Thyroid gland (tissue), 4 donors: ENCODE measurements at regions of chr22 and their contacts with region 1.

Region 1: DNA sequence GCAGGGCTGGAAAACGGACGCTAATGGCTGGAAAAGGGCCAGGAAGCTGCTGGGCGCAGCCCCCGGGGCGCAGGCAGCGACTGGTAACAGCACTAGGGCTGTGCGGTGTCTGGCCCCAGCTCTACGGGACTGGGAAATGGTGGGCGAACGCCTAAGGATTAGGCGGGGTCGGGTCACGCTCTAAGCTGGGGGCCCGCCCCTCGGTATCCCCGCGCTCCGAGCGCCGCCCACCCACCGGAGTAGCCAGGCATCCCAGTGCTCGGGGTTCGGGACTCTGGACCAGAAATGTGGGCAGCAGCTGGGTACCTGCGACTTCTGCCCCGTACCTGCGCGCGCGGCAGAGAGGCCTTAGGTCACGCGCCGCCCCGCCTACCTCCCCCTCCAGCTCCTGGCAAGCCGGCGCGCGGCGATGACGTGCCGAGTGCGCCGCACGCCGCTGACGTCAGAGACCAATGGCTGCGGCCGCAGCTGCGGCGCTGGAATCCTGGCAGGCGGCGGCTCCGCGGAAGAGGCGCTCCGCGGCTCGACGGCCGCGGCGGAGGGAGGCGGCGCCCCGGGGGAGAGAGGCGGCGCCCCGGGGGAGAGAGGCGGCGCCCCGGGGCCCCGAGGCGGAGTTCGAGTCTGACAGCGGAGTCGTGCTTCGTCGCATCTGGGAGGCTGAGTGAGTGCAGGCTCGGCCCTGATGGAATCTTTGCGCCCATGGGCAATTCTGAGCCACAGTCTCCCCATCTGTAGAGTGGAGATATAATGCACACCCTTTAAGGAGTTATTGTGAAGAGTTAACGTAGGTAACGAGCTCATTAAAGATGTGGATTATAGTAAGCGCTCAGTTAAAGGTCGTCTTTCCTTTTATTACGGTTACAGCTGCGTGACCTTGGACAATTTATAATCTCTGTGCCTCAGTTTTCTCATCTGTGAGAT is at the starts of genes HPS4 and SRRD:
- DNase-seq: peak; percentile 89 to 90
- H3K4me3 ChIP-seq: peak within 1 kb of the TSS; percentile 21 to 92 (median 74)
- H3K27ac ChIP-seq: peak within 1 kb of the TSS; percentile 85 to 91 (median 90)
- H3K4me1 ChIP-seq: peaks cover 20 to 83% of the 10 kb centered on the region in 2 donors
- H3K27me3 ChIP-seq: no peaks in the 10 kb centered on the region
- CTCF ChIP-seq: peak in 1 of 6 experiments; percentile 18
- POLR2A ChIP-seq: peak; percentile 8 to 89
- total RNA-seq, gene HPS4: 27.4 to 51.8 (median 39.1) TPM
- total RNA-seq, gene SRRD: 17.9 to 37.4 (median 26.2) TPM

Region 2: DNA sequence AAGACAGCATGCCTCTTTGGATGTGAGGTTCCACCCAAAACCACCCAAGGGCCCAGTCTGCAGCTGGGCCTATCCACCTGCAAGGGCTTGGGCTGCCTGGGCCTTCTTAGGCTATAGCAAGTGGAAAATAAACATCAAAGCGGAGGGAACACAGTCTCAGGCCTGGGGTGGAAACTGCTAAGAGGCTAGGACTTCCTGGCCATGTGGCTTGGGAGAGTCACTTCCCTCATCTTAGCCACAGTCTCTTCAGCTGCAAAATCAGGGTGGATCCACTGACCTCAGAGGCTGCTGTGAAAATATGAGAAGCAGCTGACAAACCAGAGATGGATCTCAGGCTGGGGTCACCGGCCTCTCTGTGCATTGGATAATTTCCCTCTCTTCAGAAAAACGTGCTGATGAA is 59.1 kb after region 1 on chr22:
- intact Hi-C with region 1: loop called (anchors 10 kb)
- DNase-seq: no peak
- H3K4me3 ChIP-seq: no peak overlapping the region
- H3K27ac ChIP-seq: peak overlapping the region in 1 of 3 donors; percentile 23
- H3K4me1 ChIP-seq: peaks cover 35 to 42% of the 10 kb centered on the region in 2 donors
- H3K27me3 ChIP-seq: no peaks in the 10 kb centered on the region
- CTCF ChIP-seq: no peak
- POLR2A ChIP-seq: no peak

Region 3: GRCh38 chr22:26573026-26573662 is 89.4 kb after region 1 on chr22:
- intact Hi-C with region 1: no loop called
- DNase-seq: no peak
- H3K4me3 ChIP-seq: no peak overlapping the region
- H3K27ac ChIP-seq: no peak overlapping the region
- H3K4me1 ChIP-seq: peaks cover 15 to 22% of the 10 kb centered on the region in 2 donors
- H3K27me3 ChIP-seq: no peaks in the 10 kb centered on the region
- CTCF ChIP-seq: no peak
- POLR2A ChIP-seq: no peak

Region 4: GRCh38 chr22:26589845-26590736 is 106.4 kb after region 1 on chr22 and contains the start of gene TPST2:
- intact Hi-C with region 1: loop called (anchors 10 kb)
- DNase-seq: peak; percentile 74 to 75
- H3K4me3 ChIP-seq: peak within 1 kb of the TSS; percentile 59 to 89 (median 71)
- H3K27ac ChIP-seq: peak within 1 kb of the TSS; percentile 47 to 88 (median 86)
- H3K4me1 ChIP-seq: peaks cover 28 to 35% of the 10 kb centered on the region in 2 donors
- H3K27me3 ChIP-seq: no peaks in the 10 kb centered on the region
- CTCF ChIP-seq: no peak
- POLR2A ChIP-seq: peak in 1 of 2 donors; percentile 84
- total RNA-seq, gene TPST2: 99.2 to 154 (median 121) TPM